MCF 10A (cell line): ENCODE measurements at regions of chr10 and their contacts with region 1.

Region 1: GRCh38 chr10:77756319-77757232 is 119.0 kb upstream of the KCNMA1 start:
- DNase-seq: peak; percentile 80
- H3K4me3 Mint-ChIP-seq: no peak overlapping the region
- H3K27ac Mint-ChIP-seq: no peak overlapping the region
- H3K4me1 Mint-ChIP-seq: peaks cover 38% of the 10 kb centered on the region
- H3K27me3 Mint-ChIP-seq: no peaks in the 10 kb centered on the region
- CTCF ChIP-seq: peak; percentile 81

Region 2: DNA sequence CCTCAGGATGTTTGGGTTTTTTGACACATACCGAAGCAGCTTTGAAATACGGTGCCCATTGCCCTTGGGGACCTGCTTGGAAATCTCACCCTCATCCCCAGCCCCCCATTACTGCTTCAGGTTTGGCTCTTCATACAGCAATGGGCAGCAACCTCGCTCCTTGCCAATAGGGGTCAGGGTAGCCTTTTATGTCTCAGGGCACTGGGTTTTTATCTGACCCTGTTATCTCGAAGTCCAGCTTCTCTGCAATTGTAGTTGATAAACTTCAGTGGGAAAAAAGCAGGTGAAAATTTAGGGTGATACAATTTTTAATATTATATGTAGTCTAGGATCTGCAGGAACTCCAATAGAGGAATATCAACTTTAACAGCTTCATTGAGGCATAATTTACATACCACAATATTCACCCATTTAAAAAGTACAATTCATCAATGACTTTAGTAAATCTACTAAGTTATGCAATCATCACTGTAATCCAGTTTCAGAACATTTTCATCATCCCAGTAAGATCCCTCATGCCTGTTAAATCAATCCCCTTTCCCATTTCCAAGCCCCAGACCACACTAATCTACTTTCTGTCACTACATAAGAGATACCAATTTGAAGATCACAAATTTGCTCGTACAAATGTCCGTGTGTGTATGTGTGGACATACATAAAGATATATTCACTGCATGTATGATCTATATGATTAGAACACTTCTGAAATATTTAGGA is 505.1 kb before region 1 on chr10:
- CTCF ChIA-PET with region 1: interaction called, 4 read pairs
- POLR2A ChIA-PET with region 1: no interaction called
- intact Hi-C with region 1: loop called (anchors 2 kb)
- DNase-seq: peak; percentile 50
- H3K4me3 Mint-ChIP-seq: no peak overlapping the region
- H3K27ac Mint-ChIP-seq: no peak overlapping the region
- H3K4me1 Mint-ChIP-seq: peaks cover 13% of the 10 kb centered on the region
- H3K27me3 Mint-ChIP-seq: no peaks in the 10 kb centered on the region
- CTCF ChIP-seq: peak; percentile 86

Region 3: DNA sequence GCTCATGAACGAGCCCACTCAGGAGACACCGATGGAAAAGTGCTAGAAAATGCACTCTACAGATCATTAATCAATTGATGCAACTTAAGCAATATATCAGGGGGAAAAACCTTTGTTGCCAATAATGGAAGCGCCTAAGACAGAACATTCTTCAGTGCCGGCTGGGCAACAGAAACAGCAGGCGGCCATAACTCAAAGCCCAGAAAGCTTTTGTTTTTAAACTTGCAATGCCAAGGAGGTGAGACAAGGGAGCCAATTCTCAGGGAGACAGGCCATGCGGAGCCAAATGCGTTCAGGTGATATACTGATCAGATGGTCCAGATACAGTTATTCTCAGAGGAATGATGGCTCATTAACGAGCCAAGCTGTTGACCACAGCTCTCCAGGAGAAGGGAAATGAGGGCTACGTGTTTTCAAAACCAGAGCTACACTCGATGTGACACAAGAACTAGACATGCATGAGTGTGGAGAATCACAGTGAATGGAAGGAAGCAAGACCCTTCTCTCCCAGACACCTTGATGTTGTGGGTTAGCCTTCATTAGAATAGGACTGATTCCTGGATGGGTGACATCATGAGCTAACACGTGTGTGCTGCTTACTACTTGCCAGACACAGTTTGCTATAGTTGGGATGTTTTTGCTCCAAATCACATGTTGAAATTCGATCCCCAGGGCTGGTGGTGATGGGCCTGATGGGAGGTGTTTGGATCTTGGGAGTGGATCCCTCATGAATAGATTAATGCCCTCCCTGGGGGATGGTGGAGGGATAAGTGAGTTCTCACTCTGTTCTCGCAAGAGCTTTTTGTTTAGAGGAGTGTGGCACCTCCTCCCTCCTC is 39.9 kb before region 1 on chr10:
- CTCF ChIA-PET with region 1: interaction called, 27 read pairs
- POLR2A ChIA-PET with region 1: interaction called, 3 read pairs
- intact Hi-C with region 1: loop called (anchors 1 kb)
- DNase-seq: no peak
- H3K4me3 Mint-ChIP-seq: no peak overlapping the region
- H3K27ac Mint-ChIP-seq: no peak overlapping the region
- H3K4me1 Mint-ChIP-seq: peaks cover 12% of the 10 kb centered on the region
- H3K27me3 Mint-ChIP-seq: no peaks in the 10 kb centered on the region
- CTCF ChIP-seq: no peak

Region 4: DNA sequence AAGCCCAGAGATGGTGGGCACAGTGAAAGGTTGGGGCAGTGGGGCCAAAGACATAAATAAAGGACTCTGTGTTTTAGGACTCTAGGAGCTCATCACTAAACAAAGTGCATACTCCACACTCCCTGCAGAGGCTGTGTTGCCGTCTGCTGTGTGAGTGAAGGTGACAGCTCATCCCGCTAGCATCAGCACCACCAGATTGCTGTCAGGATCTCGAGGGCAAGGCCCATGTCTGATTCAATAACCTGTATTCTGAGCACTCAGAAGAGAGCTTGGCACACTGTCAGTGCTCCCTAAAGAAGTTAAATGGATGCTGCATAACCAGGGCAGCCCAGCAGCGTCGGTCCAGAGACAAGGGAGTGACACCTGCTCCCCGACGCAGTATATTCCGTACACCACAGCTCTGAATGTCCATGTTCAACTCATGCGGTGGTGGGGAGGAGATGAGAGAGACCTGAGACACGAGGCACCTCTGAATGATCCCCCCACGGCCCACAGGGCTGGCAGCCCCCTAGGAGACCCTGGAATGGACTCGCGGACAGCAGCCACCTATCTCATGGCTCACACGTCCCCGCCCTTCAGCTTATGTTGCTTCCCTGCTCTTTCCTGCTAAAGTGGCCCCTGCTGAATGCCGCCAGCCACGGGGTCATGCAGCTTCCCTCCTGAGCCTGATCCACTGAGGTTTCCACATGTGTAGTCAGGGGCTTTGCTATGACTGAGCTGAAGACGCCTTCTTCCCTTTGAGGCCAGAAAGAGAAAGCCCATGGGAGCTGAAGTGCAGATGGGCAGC is 13.7 kb after region 1 on chr10:
- CTCF ChIA-PET with region 1: interaction called, 4 read pairs
- POLR2A ChIA-PET with region 1: interaction called, 17 read pairs
- intact Hi-C with region 1: no loop called
- DNase-seq: no peak
- H3K4me3 Mint-ChIP-seq: no peak overlapping the region
- H3K27ac Mint-ChIP-seq: peak overlapping the region; percentile 55
- H3K4me1 Mint-ChIP-seq: peaks cover 5% of the 10 kb centered on the region
- H3K27me3 Mint-ChIP-seq: no peaks in the 10 kb centered on the region
- CTCF ChIP-seq: no peak

Region 5: GRCh38 chr10:77782328-77783061 is 25.9 kb after region 1 on chr10:
- CTCF ChIA-PET with region 1: no interaction called
- POLR2A ChIA-PET with region 1: no interaction called
- intact Hi-C with region 1: no loop called
- DNase-seq: no peak
- H3K4me3 Mint-ChIP-seq: no peak overlapping the region
- H3K27ac Mint-ChIP-seq: no peak overlapping the region
- H3K4me1 Mint-ChIP-seq: peaks cover 9% of the 10 kb centered on the region
- H3K27me3 Mint-ChIP-seq: no peaks in the 10 kb centered on the region
- CTCF ChIP-seq: no peak